Activated naive CD4-positive, alpha-beta T cell treated with anti-CD3 and anti-CD28 coated beads for 36 hours (primary cell): ENCODE measurements at regions of chr2 and their contacts with region 1.

Region 1: GRCh38 chr2:152175458-152176325 is at the start of gene STAM2:
- DNase-seq: peak; percentile 93
- H3K4me3 Mint-ChIP-seq: peak within 1 kb of the TSS; percentile 95
- H3K27ac Mint-ChIP-seq: peak within 1 kb of the TSS; percentile 97
- H3K4me1 Mint-ChIP-seq: peaks cover 35% of the 10 kb centered on the region
- H3K27me3 Mint-ChIP-seq: no peaks in the 10 kb centered on the region
- total RNA-seq, gene STAM2: 9.6 to 10.8 TPM

Region 2: DNA sequence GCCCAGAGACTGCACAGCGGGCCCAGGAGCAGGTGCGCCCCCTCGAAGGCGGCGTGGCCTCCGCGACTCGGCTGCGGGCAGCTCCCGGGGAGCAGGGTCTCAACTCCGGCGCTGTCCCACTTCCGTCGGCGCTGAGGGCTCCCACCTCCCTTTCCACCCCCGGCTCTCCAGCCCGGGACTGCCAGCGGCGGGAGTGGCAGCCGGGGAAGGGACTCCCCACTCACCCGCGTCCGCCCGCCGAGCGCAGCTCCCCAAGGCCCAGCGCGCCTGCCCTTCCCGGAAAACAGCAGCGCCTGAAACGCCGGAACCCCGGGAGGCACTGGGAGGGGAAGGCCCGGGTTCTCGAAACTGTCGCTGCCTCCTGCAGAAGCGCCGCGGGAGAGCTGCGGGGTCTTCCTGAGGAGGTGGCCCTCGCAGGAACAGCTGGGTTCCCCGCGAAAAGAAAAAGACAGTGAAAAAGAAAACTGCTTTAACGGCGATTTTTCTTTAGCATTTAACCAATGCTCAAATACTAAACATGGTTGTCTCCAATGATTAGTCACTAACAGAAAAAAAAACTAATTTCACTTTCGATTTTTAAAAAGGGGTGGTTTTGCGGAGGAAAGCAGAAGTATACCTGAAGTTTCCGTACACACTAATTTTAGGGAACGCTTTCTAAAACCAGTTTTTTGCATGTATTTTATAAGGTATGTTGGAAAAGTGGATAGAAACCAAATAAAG is 886.2 kb before region 1 on chr2 and contains the start of gene NMI:
- CTCF ChIA-PET with region 1: no interaction called
- intact Hi-C with region 1: loop called (anchors 10 kb)
- DNase-seq: peak; percentile 81
- H3K4me3 Mint-ChIP-seq: peak within 1 kb of the TSS; percentile 89
- H3K27ac Mint-ChIP-seq: peak within 1 kb of the TSS; percentile 94
- H3K4me1 Mint-ChIP-seq: peaks cover 41% of the 10 kb centered on the region
- H3K27me3 Mint-ChIP-seq: no peaks in the 10 kb centered on the region
- total RNA-seq, gene NMI: 18.6 to 20.0 TPM

Region 3: GRCh38 chr2:152036611-152037469 is 138.9 kb before region 1 on chr2:
- CTCF ChIA-PET with region 1: interaction called, 5 read pairs
- intact Hi-C with region 1: loop called (anchors 1 kb)
- DNase-seq: peak; percentile 79
- H3K4me3 Mint-ChIP-seq: no peak overlapping the region
- H3K27ac Mint-ChIP-seq: no peak overlapping the region
- H3K4me1 Mint-ChIP-seq: no peaks in the 10 kb centered on the region
- H3K27me3 Mint-ChIP-seq: no peaks in the 10 kb centered on the region

Region 4: GRCh38 chr2:152415231-152415642 is 239.5 kb after region 1 on chr2:
- CTCF ChIA-PET with region 1: interaction called, 3 read pairs
- intact Hi-C with region 1: loop called (anchors 1 kb)
- DNase-seq: peak; percentile 60
- H3K4me3 Mint-ChIP-seq: no peak overlapping the region
- H3K27ac Mint-ChIP-seq: peak overlapping the region; percentile 78
- H3K4me1 Mint-ChIP-seq: peaks cover 40% of the 10 kb centered on the region
- H3K27me3 Mint-ChIP-seq: peaks cover 29% of the 10 kb centered on the region

Region 5: GRCh38 chr2:152635635-152636298 is 460.1 kb after region 1 on chr2:
- CTCF ChIA-PET with region 1: interaction called, 23 read pairs
- intact Hi-C with region 1: loop called (anchors 1 kb)
- DNase-seq: peak; percentile 82
- H3K4me3 Mint-ChIP-seq: no peak overlapping the region
- H3K27ac Mint-ChIP-seq: no peak overlapping the region
- H3K4me1 Mint-ChIP-seq: peaks cover 3% of the 10 kb centered on the region
- H3K27me3 Mint-ChIP-seq: no peaks in the 10 kb centered on the region

Region 6: DNA sequence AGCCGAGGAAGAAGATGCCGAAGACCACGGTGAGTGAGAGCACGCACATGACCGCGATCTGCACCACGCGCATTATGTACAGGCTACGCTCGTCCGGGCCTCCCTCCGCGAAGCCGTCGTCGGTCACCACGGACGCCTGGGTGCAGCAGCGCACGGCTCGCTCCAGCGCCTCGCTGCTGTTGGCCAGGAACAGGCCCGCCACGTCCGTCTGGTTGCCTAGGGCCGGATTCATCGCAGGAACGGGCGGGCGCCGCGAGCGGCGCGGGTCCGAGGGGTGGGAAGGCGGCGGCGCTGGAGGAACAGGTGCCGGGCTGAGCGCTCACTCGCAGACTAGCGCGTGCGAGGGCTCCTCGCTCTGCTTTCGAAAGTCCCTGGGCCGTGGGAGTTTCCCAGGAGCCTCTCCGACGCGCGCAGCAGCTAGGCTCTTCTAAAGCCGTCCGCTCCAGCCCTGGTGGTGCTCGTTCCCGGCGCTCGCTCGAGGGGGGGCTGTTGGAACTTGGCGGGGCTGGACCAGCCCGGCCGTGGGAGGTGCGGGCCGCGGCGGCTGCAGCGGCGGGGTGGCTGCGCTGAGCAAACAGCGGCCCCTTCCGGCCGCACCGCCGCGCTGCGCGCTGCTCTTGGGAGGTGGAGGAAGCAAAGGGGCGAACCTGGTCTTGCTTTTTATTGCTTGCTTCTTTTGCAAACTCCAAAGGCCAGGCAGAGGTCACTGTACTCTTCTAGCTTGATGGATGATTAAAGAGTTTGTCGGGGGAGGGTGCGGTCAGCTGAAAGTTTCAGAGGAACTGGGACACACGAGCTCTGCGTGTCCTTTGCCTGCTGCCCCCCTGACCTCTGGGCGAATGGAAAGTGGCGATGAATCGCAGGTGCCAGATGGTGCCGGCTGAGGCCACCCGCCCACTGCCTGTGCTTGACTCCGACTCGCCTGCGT is 1302.9 kb after region 1 on chr2 and contains the start of gene RPRM:
- CTCF ChIA-PET with region 1: no interaction called
- intact Hi-C with region 1: loop called (anchors 1 kb)
- DNase-seq: peak; percentile 55
- H3K4me3 Mint-ChIP-seq: peak within 1 kb of the TSS; percentile 52
- H3K27ac Mint-ChIP-seq: no peak within 1 kb of the TSS
- H3K4me1 Mint-ChIP-seq: peaks cover 15% of the 10 kb centered on the region
- H3K27me3 Mint-ChIP-seq: peaks cover 56% of the 10 kb centered on the region
- total RNA-seq, gene RPRM: not detected